Motor neuron (in vitro differentiated cells): ENCODE measurements at regions of chr2 and their contacts with region 1.

Region 1: GRCh38 chr2:36355151-36355889 is at the start of gene CRIM1:
- ATAC-seq: peak; percentile 63 to 78 (median 72)
- H3K4me3 ChIP-seq: peak within 1 kb of the TSS; percentile 63 to 99 (median 91)
- H3K27ac ChIP-seq: peak within 1 kb of the TSS; percentile 81 to 84
- H3K4me1 ChIP-seq: peaks cover 17 to 18% of the 10 kb centered on the region in 2 donors
- total RNA-seq, gene CRIM1: 15.1 to 61.1 (median 24.3) TPM

Region 2: DNA sequence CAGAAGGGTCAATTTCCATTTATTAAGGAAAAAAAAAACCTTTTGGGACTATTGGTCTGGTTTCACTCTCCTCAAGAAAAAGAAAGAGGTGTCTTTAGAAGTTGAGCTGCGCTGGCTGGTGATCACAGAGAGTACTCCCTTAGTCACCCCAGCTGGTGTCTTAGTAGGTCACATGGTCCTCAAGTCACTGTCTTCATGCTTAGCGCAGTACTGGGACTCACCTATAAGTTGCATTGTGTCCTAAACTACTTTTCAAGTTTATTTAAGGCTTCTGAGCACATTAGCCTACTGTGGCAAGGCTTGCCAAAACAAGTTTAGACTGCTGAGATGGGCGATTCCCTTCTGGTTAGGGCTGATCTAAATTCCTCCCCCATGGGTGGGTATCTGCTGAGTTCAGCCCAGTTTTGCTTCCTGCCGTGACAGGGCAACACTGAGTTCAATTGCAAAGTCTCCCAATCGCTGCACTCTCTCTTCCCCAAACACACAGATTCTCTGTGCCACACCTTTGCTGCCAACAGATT is 824.6 kb before region 1 on chr2:
- in situ Hi-C with region 1: no loop called
- ATAC-seq: no peak
- H3K4me3 ChIP-seq: no peak overlapping the region
- H3K27ac ChIP-seq: no peak overlapping the region
- H3K4me1 ChIP-seq: no peaks in the 10 kb centered on the region

Region 3: DNA sequence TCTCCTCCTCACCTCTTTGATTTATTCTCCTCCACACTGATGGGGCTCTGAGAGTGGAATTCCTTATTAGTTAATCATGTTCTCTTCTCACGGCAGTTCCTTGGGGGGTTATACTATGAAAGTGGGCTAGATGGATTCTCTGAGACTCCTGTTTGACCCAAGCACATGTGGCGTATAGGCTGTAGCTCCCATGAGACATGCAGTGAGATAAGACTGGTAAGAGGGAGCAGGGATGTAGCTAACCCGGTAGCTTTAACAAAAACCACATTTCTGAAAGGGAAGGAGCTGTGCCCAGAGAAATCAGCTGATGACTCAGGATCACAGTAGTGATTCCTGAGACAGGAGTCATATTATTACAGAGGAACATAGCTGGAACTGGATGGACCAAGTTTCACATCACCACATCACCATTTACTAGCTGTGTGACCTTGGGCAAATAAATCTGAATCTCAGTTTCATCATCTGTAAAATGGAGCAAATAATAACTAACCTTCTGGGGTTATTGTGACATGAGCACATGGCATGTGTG is 83.2 kb after region 1 on chr2:
- in situ Hi-C with region 1: no loop called
- ATAC-seq: peak; percentile 54 to 95 (median 88)
- H3K4me3 ChIP-seq: no peak overlapping the region
- H3K27ac ChIP-seq: no peak overlapping the region
- H3K4me1 ChIP-seq: peaks cover 12 to 40% of the 10 kb centered on the region in 2 donors

Region 4: DNA sequence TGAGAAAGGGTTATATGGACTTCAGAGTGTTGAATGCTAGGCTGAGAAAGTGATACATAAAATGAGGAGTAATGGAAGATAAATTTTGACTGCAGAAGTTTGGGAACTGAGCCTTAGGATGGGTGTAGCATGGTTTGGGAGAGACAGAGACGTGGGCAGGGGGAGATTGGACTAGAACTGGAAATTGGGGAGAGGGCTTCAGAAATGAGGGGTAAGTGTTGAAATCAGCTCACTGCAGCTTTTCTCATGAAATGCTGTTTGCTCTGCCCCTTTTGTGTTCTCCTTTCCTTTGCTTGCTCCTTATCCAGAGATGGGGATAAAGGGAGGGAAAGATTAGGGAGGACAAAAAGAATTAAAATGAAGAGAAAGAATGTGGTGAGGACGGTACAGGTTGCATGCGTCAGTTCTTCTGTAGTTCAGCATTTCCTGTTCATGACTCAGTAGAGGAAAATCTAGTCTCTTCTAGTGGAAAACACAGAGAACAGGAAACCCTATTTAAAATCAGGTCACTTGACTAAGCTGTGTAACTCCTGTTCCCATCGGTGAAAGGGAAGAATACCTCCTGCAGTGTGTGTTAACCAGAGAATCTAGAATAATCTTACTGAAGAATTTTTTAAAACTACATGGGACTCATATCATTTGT is 105.8 kb after region 1 on chr2:
- in situ Hi-C with region 1: loop called in 1 of 9 experiments (anchors 25 kb)
- ATAC-seq: peak in 2 of 8 experiments; percentile 84 to 97
- H3K4me3 ChIP-seq: no peak overlapping the region
- H3K27ac ChIP-seq: no peak overlapping the region
- H3K4me1 ChIP-seq: peaks cover 4 to 21% of the 10 kb centered on the region in 2 donors

Region 5: GRCh38 chr2:36478332-36478738 is 123.0 kb after region 1 on chr2:
- in situ Hi-C with region 1: loop called in 2 of 9 experiments (anchors 25 kb)
- ATAC-seq: peak in 3 of 8 experiments; percentile 77 to 91 (median 82)
- H3K4me3 ChIP-seq: no peak overlapping the region
- H3K27ac ChIP-seq: no peak overlapping the region
- H3K4me1 ChIP-seq: no peaks in the 10 kb centered on the region

Region 6: DNA sequence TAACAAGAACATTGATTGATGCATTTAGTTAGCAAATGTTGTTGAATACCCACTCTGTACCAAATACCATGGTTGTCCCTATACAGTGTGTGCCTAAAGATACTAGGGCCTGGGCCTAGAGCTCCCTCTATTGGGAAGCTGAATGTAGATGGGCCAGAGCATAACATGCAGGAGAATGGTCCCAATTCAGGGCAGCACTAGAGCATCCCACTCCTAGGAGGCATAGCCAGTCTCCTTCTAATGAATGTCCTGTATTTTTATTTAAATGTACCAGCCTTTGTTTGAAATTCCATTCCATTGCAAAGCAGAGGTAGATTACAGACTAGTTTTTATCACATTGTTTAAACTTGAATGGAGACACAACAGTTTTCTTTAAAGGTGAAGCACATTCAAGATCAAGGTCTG is 152.1 kb after region 1 on chr2:
- in situ Hi-C with region 1: loop called in 1 of 9 experiments (anchors 10 kb)
- ATAC-seq: peak; percentile 83 to 100 (median 88)
- H3K4me3 ChIP-seq: no peak overlapping the region
- H3K27ac ChIP-seq: no peak overlapping the region
- H3K4me1 ChIP-seq: no peaks in the 10 kb centered on the region

Region 7: GRCh38 chr2:36663851-36664695 is 308.8 kb after region 1 on chr2:
- in situ Hi-C with region 1: loop called in 3 of 9 experiments (anchors 10 to 25 kb)
- ATAC-seq: peak; percentile 44 to 97 (median 81)
- H3K4me3 ChIP-seq: no peak overlapping the region
- H3K27ac ChIP-seq: no peak overlapping the region
- H3K4me1 ChIP-seq: peaks cover 0 to 2% of the 10 kb centered on the region in 2 donors